MCF 10A (cell line): ENCODE measurements at regions of chr10 and their contacts with region 1.

Region 1: DNA sequence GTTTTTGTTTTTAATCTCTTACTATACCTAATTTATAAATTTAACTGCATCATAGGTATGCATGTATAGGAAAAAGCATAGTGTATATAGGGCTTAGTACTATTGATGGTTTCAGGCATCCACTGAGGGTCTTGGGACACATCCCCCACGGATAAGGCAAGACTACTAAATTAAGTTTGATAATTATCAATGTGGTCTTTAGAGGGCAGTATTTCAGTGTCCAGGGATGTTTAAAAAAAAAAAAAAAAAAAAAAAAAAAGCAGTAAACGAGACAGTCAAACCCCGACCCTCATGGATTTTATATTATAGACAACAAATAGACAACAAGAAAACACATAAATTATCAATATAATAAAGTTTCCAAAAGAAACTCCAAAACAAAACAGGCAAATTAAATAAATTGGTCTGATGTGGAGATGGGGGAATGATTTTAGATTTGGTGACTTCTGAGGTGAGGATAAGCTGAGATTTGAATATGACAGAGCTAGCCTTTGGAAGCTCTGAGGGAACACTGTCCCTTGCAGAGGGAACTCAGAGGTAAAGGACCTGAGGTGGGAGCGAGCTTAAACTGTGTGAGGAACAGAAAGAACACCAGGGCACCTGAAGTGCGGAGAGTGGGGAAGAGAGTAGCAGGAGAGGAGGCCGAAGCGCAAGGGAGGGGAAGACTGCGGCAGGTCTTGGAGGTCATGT is 14.8 kb downstream of the ACSM6 start:
- DNase-seq: peak; percentile 20
- H3K4me3 Mint-ChIP-seq: no peak overlapping the region
- H3K27ac Mint-ChIP-seq: no peak overlapping the region
- H3K4me1 Mint-ChIP-seq: no peaks in the 10 kb centered on the region
- H3K27me3 Mint-ChIP-seq: no peaks in the 10 kb centered on the region
- CTCF ChIP-seq: peak; percentile 29

Region 2: DNA sequence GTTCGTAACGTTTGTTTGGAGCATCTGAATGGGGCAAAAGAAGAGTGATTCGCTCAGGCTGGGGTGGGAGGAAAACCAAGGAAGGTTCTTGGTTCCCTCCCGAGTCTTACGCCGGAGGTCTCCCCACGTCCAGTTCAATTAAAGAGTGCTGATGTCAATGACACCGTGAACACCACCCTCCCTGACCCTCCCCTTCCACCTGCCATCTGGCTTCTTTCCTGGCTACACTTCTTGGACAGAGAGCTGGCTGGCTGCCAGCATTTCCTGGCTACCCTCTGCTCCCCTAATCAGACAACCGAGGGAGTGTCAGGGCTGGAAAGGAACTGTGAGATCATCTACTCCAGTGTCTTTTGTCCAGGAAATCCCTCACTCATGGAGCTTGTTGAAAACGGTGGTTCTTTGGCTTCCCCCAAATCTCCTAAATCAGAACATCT is 1666.5 kb before region 1 on chr10:
- CTCF ChIA-PET with region 1: no interaction called
- POLR2A ChIA-PET with region 1: no interaction called
- intact Hi-C with region 1: no loop called
- DNase-seq: peak; percentile 39
- H3K4me3 Mint-ChIP-seq: no peak overlapping the region
- H3K27ac Mint-ChIP-seq: no peak overlapping the region
- H3K4me1 Mint-ChIP-seq: no peaks in the 10 kb centered on the region
- H3K27me3 Mint-ChIP-seq: peaks cover 25% of the 10 kb centered on the region
- CTCF ChIP-seq: no peak

Region 3: GRCh38 chr10:95423164-95424005 is 214.5 kb after region 1 on chr10:
- CTCF ChIA-PET with region 1: no interaction called
- POLR2A ChIA-PET with region 1: no interaction called
- intact Hi-C with region 1: loop called (anchors 10 kb)
- DNase-seq: no peak
- H3K4me3 Mint-ChIP-seq: no peak overlapping the region
- H3K27ac Mint-ChIP-seq: no peak overlapping the region
- H3K4me1 Mint-ChIP-seq: no peaks in the 10 kb centered on the region
- H3K27me3 Mint-ChIP-seq: peaks cover 10% of the 10 kb centered on the region
- CTCF ChIP-seq: no peak